Mammary epithelial cell (primary cell): ENCODE measurements at regions of chr2 and their contacts with region 1.

Region 1: GRCh38 chr2:73233154-73233931 is at the start of gene PRADC1:
- DNase-seq: peak; percentile 100
- H3K4me3 ChIP-seq: peak within 1 kb of the TSS; percentile 83 to 99 (median 97)
- H3K27ac ChIP-seq: peak within 1 kb of the TSS; percentile 66
- H3K4me1 ChIP-seq: peaks cover 19% of the 10 kb centered on the region
- H3K27me3 ChIP-seq: no peaks in the 10 kb centered on the region
- CTCF ChIP-seq: no peak
- total RNA-seq, gene PRADC1: 11.5 to 14.0 TPM

Region 2: DNA sequence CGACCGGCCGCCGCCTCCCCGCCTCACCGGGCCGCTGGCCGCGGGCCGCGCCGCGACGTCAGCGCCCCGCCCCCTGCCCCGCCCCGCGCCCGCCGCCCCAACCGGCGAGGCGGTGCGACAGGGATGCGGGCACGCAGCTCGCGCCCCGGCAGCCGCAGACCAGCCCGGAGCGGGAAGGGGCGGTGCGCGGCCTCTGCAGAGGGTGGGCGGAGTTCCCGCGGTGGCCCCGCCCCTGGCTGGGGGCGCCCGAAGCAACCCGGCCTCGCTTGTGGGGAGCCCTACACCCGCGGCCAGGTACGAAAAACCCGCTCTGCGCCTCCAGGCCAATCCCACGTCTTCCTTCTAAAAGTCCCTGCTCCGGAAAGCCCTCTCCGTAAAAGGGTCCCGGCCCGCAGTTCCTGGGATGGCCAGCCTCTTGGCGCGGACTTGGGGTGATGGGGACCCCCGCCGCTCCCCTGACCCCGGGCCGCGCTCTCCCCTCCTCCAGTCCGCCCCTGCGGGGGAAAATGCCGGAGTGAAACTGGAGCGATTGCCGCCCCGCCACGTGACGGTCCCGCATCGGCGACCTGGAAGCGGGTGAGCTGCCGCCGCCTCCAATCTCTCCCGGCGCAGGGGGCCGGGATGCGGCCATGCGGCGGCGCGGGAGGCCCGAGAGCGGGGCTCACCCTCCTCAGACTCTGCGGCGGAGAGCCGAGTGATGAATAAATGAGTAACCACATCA is 120.3 kb before region 1 on chr2 and contains the start of gene RAB11FIP5:
- CTCF ChIA-PET with region 1: no interaction called
- dilution Hi-C with region 1: no loop called
- in situ Hi-C with region 1: no loop called
- intact Hi-C with region 1: loop called (anchors 5 kb)
- DNase-seq: peak; percentile 86
- H3K4me3 ChIP-seq: peak within 1 kb of the TSS; percentile 79 to 89 (median 86)
- H3K27ac ChIP-seq: peak within 1 kb of the TSS; percentile 92
- H3K4me1 ChIP-seq: peaks cover 16% of the 10 kb centered on the region
- H3K27me3 ChIP-seq: no peaks in the 10 kb centered on the region
- CTCF ChIP-seq: no peak
- total RNA-seq, gene RAB11FIP5: 36.0 to 39.7 TPM

Region 3: GRCh38 chr2:73243884-73244570 is 10.7 kb after region 1 on chr2:
- CTCF ChIA-PET with region 1: no interaction called
- dilution Hi-C with region 1: no loop called
- in situ Hi-C with region 1: no loop called
- intact Hi-C with region 1: loop called (anchors 1 kb)
- DNase-seq: peak; percentile 92
- H3K4me3 ChIP-seq: no peak overlapping the region
- H3K27ac ChIP-seq: no peak overlapping the region
- H3K4me1 ChIP-seq: peaks cover 20% of the 10 kb centered on the region
- H3K27me3 ChIP-seq: no peaks in the 10 kb centered on the region
- CTCF ChIP-seq: no peak